CD4-positive, alpha-beta memory T cell (primary cell): ENCODE measurements at regions of chr1 and their contacts with region 1.

Region 1: GRCh38 chr1:147225193-147225730 is at the start of gene FMO5:
- DNase-seq: peak; percentile 42 to 73 (median 54)
- H3K4me3 ChIP-seq: peak within 1 kb of the TSS; percentile 63 to 96
- H3K4me3 Mint-ChIP-seq: peak within 1 kb of the TSS; percentile 89 to 98 (median 97)
- H3K27ac ChIP-seq: peak within 1 kb of the TSS; percentile 41
- H3K27ac Mint-ChIP-seq: peak within 1 kb of the TSS; percentile 78 to 97 (median 89)
- H3K4me1 ChIP-seq: peaks cover 11% of the 10 kb centered on the region
- H3K4me1 Mint-ChIP-seq: peaks cover 7 to 36% (median 14%) of the 10 kb centered on the region in 4 donors
- H3K27me3 ChIP-seq: no peaks in the 10 kb centered on the region
- H3K27me3 Mint-ChIP-seq: no peaks in the 10 kb centered on the region
- total RNA-seq, gene FMO5: 1.0 to 1.5 TPM

Region 2: GRCh38 chr1:147093411-147093810 is 131.9 kb before region 1 on chr1:
- CTCF ChIA-PET with region 1: no interaction called
- POLR2A ChIA-PET with region 1: no interaction called
- intact Hi-C with region 1: no loop called
- DNase-seq: no peak
- H3K4me3 ChIP-seq: no peak overlapping the region
- H3K4me3 Mint-ChIP-seq: no peak overlapping the region
- H3K27ac ChIP-seq: no peak overlapping the region
- H3K27ac Mint-ChIP-seq: peak overlapping the region in 1 of 7 donors; percentile 31
- H3K4me1 ChIP-seq: no peaks in the 10 kb centered on the region
- H3K4me1 Mint-ChIP-seq: peaks cover 0 to 9% (median 4%) of the 10 kb centered on the region in 4 donors
- H3K27me3 ChIP-seq: no peaks in the 10 kb centered on the region
- H3K27me3 Mint-ChIP-seq: peaks cover 0 to under 1% of the 10 kb centered on the region in 2 donors

Region 3: DNA sequence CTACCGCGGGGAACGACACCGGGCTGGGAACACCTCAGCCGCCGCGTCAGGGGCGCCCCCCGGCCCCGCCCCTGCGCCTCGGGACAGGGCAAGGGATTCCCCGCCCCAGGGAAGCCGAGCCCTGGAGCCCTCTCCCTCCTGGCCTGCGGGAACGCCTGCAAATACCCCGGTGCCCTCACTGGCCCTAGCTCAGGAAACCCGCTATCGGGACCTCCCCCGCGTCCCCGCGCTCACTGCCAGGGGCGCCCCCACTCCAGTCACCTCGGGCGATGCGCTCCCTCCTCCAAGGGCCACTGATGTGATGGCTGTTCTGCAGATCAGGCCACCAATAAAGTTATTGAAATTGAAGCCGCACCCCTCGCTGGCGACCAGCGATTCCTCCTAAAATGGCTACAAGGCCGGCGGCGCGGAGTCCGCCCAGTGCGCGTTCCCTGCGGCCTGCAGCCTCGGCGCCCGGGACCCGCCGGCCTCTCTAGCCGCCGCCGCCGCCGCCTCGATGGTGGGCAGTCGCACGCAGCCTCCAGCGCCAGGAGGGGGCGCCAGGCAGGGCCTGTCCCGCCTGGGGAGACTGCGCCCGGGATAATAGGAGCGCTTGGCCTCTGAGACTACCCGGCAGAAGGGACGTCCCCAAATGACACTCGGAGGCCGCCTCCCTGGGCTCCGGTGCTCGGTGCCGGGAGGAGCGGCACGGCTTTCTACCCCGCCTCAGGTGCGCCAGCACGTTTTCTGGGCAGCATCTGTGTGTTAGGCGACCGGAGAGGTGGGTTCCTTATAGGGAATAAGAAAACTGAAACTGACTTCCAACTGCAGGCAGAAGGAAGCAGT is 52.9 kb before region 1 on chr1 and contains the start of gene PRKAB2:
- CTCF ChIA-PET with region 1: interaction called, 7 read pairs
- POLR2A ChIA-PET with region 1: interaction called, 9 read pairs
- intact Hi-C with region 1: loop called (anchors 1 kb)
- DNase-seq: peak; percentile 89 to 92 (median 90)
- H3K4me3 ChIP-seq: peak within 1 kb of the TSS; percentile 72 to 84
- H3K4me3 Mint-ChIP-seq: peak within 1 kb of the TSS; percentile 96 to 99 (median 98)
- H3K27ac ChIP-seq: peak within 1 kb of the TSS; percentile 75
- H3K27ac Mint-ChIP-seq: peak within 1 kb of the TSS; percentile 94 to 98 (median 96)
- H3K4me1 ChIP-seq: peaks cover 32% of the 10 kb centered on the region
- H3K4me1 Mint-ChIP-seq: peaks cover 21 to 43% (median 31%) of the 10 kb centered on the region in 4 donors
- H3K27me3 ChIP-seq: no peaks in the 10 kb centered on the region
- H3K27me3 Mint-ChIP-seq: peaks cover 0 to 1% of the 10 kb centered on the region in 2 donors
- total RNA-seq, gene PRKAB2: 19.8 to 24.5 TPM

Region 4: DNA sequence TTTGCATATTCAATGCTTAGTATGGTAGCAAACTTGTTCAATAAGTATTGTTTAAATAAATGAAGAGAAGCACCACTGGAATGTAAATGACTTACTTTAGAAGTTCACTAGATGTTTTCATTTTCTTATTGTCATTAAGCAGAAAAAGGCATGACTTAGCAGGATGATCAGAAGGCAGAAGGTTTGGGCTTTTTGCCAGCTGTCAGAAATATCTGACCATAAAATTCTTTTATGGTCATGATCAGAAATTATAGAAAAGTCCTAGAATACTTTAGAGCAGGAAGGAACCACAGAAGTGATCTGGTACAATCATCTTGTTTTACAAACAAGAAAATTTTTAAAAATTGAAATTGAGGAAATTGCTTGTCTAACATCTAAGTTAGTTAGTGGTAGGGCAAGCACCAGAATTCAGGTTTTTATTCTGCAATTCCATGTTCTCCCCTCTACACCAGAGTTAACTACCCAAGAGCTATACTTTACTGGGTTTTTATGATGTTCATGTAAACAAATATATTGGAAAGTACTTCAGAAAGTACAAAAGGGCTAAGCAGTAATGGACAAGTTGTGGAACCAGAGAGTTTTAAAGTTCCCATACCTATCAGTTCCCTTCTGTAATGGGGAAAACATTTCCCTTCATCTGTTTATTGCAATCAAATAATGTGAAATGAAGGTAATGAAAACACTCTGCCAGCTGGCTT is 10.3 kb before region 1 on chr1:
- CTCF ChIA-PET with region 1: no interaction called
- POLR2A ChIA-PET with region 1: no interaction called
- intact Hi-C with region 1: no loop called
- DNase-seq: no peak
- H3K4me3 ChIP-seq: no peak overlapping the region
- H3K4me3 Mint-ChIP-seq: no peak overlapping the region
- H3K27ac ChIP-seq: no peak overlapping the region
- H3K27ac Mint-ChIP-seq: no peak overlapping the region
- H3K4me1 ChIP-seq: no peaks in the 10 kb centered on the region
- H3K4me1 Mint-ChIP-seq: no peaks in the 10 kb centered on the region
- H3K27me3 ChIP-seq: no peaks in the 10 kb centered on the region
- H3K27me3 Mint-ChIP-seq: no peaks in the 10 kb centered on the region

Region 5: GRCh38 chr1:147252540-147252939 is 27.3 kb after region 1 on chr1:
- CTCF ChIA-PET with region 1: no interaction called
- POLR2A ChIA-PET with region 1: no interaction called
- intact Hi-C with region 1: no loop called
- DNase-seq: no peak
- H3K4me3 ChIP-seq: no peak overlapping the region
- H3K4me3 Mint-ChIP-seq: no peak overlapping the region
- H3K27ac ChIP-seq: no peak overlapping the region
- H3K27ac Mint-ChIP-seq: no peak overlapping the region
- H3K4me1 ChIP-seq: peaks cover 4% of the 10 kb centered on the region
- H3K4me1 Mint-ChIP-seq: peaks cover 14 to 36% (median 21%) of the 10 kb centered on the region in 4 donors
- H3K27me3 ChIP-seq: no peaks in the 10 kb centered on the region
- H3K27me3 Mint-ChIP-seq: no peaks in the 10 kb centered on the region

Region 6: DNA sequence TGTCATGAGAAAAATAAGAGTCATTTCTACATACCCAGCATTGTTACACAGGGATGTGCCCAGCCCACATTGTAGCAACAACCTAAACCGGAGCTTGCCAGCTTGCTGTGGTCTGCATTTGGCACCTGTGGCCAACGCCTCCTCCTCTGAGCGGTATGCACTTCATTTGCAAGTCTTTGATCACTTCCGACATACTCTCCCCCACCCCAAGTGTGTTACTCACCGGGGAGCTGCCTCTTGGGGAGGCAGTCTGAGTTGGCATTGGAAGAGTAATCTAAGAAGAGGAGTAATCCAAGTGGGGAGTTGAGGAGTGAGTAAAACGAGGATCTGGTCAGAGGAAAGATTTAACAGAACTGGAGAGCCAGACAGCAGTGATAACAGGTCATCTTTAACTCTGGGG is 319.9 kb after region 1 on chr1:
- CTCF ChIA-PET with region 1: no interaction called
- POLR2A ChIA-PET with region 1: no interaction called
- intact Hi-C with region 1: no loop called
- DNase-seq: peak; percentile 86 to 96 (median 90)
- H3K4me3 ChIP-seq: no peak overlapping the region
- H3K4me3 Mint-ChIP-seq: peak overlapping the region in 6 of 8 donors; percentile 63 to 76 (median 72)
- H3K27ac ChIP-seq: no peak overlapping the region
- H3K27ac Mint-ChIP-seq: peak overlapping the region in 6 of 7 donors; percentile 72 to 96 (median 82)
- H3K4me1 ChIP-seq: peaks cover 66% of the 10 kb centered on the region
- H3K4me1 Mint-ChIP-seq: peaks cover 20 to 44% (median 31%) of the 10 kb centered on the region in 4 donors
- H3K27me3 ChIP-seq: no peaks in the 10 kb centered on the region
- H3K27me3 Mint-ChIP-seq: no peaks in the 10 kb centered on the region